Posterior vena cava (tissue), 2 donors: ENCODE measurements at regions of chr1 and their contacts with region 1.

Region 1: DNA sequence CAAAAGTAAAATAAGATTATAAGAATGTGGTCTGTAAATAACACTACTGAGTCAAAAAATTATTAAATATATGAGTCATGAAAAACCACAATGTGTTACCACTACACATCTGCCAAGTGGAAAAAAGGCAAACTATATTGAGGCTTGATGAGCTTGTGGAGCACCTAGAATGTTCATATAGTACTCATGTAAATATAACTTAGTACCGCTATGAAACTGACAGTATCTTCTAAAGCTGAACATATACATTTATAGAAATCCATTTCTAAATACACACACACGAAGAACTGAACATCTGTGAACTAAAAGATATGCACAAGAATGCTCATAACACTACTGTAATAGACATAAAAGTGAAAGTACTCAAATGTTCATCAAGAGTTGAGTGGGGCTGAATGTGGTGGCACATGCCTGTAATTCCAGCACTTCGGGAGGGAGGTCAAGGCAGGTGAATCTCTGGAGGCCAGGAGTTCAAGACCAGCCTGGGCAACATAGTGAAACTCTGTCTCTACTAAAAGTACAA is 18.5 kb upstream of the GBP3 start:
- DNase-seq: no peak

Region 2: DNA sequence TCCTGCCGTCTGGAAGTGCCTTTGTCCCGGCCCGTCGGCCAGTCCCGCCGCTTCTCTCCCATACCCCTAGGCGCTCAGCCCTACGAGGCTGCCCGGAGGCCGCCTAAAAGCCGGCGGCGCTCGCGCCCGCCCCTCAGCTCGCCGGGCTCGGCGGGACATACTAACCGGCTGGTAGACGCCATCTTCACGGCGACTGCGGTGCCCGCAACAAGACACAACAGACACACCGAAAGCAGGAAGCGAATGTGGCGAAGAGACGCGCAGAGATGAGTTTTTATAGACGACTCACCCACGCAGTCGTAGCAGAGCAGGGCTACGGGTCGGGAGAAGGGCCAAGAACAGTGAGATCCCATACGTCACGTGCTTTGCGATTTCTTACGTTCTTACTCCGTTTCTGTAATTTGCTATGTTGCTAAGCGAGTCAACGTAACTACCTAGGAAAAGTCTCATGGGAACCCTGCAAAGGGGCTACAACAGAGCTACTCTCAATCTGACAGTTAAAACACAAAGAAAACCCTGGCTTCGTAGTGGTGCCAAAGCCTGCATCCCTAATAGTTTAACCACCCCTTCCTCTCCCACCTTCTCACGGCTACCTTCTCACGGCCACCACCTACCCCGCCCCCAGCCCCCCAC is 149.7 kb before region 1 on chr1 and contains the start of gene GTF2B:
- intact Hi-C with region 1: no loop called
- DNase-seq: peak; percentile 96
- total RNA-seq, gene GTF2B: 16.8 to 17.9 TPM

Region 3: DNA sequence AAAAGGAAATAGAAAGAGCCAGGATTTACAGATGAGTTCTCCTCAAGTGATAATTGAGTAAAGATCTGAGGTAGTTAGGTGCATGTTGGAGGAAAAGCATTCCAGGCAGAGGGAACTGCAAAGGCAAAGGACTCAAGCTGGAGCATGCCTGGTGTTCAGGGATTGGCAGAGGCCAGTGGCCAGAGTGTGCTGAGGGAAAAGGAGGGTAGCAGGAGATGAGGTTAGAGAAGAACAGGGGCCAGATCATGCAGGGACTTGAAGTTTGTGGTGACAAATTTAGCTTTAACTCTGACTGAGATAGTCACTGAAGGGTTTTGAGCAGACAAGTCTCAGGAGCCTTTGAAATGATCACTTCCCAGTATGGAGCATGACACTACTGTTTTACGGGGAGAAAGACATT is 130.8 kb before region 1 on chr1:
- intact Hi-C with region 1: no loop called
- DNase-seq: no peak

Region 4: GRCh38 chr1:89843281-89844121 is 802.3 kb after region 1 on chr1:
- intact Hi-C with region 1: loop called in 1 of 2 experiments (anchors 5 kb)
- DNase-seq: peak; percentile 89